ENCODE measurements at regions of chr3 and their contacts with region 1.

Region 1: DNA sequence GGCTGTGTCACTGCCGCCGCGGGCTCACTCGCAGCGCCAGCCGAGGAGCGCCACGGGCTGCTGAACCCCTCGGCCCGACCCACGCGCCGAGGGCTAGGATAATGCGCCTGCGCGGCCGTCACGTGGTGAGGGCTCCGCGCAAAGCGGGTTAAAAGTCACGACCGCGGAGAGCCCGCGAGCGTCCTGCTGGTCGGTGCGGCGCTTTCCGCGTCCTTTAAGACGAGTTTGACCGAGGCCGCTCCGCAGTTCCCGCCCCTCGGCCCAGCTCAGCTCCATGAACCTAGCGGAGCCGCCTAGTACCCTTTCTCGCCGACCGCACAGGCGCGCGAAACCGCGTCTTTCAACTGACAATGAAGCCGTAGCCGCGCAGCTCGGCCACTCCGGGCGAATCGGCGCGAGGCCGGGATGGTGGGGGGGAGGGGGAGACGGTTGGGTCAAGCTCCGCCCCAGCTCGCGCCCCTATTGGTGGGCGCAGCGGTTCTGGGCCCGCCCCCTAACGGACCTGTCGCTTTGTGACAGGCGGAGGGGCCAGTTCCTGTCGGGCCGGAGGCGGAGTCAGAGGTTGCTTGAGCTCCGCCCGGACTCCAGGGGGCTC is 636 bp upstream of the STT3B start:
- DNase-seq: peak; percentile 100
- H3K4me3 Mint-ChIP-seq: peak overlapping the region; percentile 95
- H3K27ac Mint-ChIP-seq: peak overlapping the region; percentile 99
- H3K4me1 Mint-ChIP-seq: peaks cover 19% of the 10 kb centered on the region
- H3K27me3 Mint-ChIP-seq: no peaks in the 10 kb centered on the region

Region 2: GRCh38 chr3:30475038-30475808 is 1056.9 kb before region 1 on chr3:
- intact Hi-C with region 1: no loop called
- DNase-seq: peak; percentile 73
- H3K4me3 Mint-ChIP-seq: peak overlapping the region; percentile 7
- H3K27ac Mint-ChIP-seq: peak overlapping the region; percentile 18
- H3K4me1 Mint-ChIP-seq: peaks cover 33% of the 10 kb centered on the region
- H3K27me3 Mint-ChIP-seq: no peaks in the 10 kb centered on the region

Region 3: DNA sequence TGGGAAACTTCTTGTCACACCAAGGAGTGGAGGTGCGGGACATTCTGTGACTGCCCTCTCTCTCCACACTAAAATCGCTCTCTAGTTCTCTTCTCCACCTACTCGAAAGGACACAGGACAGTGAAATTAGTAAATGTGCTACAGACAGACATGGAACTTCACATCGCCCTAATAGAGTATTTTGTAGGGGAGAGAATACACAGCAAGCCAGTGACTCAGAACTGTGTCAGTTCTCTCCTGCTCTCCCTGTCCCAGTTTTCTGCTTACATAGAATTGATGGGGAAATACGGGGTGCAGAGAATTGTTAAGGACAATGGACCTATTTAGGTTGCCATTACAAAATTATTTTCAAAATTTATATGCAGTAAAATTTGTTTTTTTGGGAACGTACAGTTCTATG is 478.1 kb before region 1 on chr3:
- intact Hi-C with region 1: no loop called
- DNase-seq: no peak
- H3K4me3 Mint-ChIP-seq: no peak overlapping the region
- H3K27ac Mint-ChIP-seq: no peak overlapping the region
- H3K4me1 Mint-ChIP-seq: peaks cover 4% of the 10 kb centered on the region
- H3K27me3 Mint-ChIP-seq: no peaks in the 10 kb centered on the region

Region 4: DNA sequence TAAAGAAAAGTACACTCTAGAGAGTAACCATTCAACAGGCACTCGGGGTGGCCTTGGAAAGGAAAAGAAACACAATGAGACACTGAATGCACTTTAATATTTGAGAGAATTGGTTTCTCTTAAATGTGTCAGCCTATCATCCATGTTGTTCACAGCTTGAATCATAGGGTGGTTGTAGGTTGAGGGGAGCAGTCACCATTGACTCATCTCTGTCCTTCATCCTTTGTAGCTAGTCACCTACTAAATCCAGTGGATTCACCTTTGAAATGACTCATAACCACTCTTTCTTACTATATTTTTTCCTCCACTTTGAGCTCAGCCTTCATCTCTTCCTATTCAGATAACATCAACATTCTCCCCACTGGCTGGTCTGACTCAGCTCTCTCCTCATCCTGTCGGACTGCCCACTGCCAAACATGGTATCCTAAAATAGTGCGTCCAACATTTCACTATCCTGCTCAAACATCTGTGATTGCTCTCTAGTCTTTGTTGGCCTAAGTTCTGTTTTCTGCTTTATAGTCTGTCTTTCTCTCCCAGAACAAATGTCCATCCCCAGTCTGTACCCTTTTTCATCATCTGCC is 455.0 kb before region 1 on chr3:
- intact Hi-C with region 1: loop called (anchors 1 kb)
- DNase-seq: peak; percentile 79
- H3K4me3 Mint-ChIP-seq: peak overlapping the region; percentile 22
- H3K27ac Mint-ChIP-seq: peak overlapping the region; percentile 83
- H3K4me1 Mint-ChIP-seq: peaks cover 32% of the 10 kb centered on the region
- H3K27me3 Mint-ChIP-seq: no peaks in the 10 kb centered on the region

Region 5: DNA sequence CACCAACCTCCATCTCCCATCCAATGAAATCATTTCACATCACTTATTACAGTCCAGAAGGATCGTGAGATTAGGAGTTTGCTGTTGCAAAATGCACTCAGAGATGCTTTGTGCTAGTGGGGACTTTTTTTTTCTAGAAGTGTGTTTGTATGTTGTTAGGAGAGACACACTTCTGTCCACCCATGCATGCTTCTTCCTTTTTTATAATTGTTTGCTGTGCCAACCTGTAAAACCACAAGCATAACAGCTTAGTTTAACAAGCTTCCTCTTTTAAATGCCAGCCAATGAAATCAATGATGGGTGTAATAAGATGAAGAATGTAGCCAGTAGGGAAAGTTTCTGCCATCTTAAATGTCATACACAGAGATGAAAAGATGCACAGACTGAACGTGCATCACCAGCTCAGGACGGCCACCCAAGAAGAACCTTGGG is 304.9 kb before region 1 on chr3:
- intact Hi-C with region 1: loop called (anchors 5 kb)
- DNase-seq: no peak
- H3K4me3 Mint-ChIP-seq: peak overlapping the region; percentile 18
- H3K27ac Mint-ChIP-seq: peak overlapping the region; percentile 89
- H3K4me1 Mint-ChIP-seq: peaks cover 77% of the 10 kb centered on the region
- H3K27me3 Mint-ChIP-seq: no peaks in the 10 kb centered on the region

Region 6: GRCh38 chr3:31472479-31473390 is 59.4 kb before region 1 on chr3:
- intact Hi-C with region 1: loop called (anchors 2 kb)
- DNase-seq: peak; percentile 70
- H3K4me3 Mint-ChIP-seq: no peak overlapping the region
- H3K27ac Mint-ChIP-seq: peak overlapping the region; percentile 9
- H3K4me1 Mint-ChIP-seq: peaks cover 13% of the 10 kb centered on the region
- H3K27me3 Mint-ChIP-seq: peaks cover 17% of the 10 kb centered on the region

Region 7: DNA sequence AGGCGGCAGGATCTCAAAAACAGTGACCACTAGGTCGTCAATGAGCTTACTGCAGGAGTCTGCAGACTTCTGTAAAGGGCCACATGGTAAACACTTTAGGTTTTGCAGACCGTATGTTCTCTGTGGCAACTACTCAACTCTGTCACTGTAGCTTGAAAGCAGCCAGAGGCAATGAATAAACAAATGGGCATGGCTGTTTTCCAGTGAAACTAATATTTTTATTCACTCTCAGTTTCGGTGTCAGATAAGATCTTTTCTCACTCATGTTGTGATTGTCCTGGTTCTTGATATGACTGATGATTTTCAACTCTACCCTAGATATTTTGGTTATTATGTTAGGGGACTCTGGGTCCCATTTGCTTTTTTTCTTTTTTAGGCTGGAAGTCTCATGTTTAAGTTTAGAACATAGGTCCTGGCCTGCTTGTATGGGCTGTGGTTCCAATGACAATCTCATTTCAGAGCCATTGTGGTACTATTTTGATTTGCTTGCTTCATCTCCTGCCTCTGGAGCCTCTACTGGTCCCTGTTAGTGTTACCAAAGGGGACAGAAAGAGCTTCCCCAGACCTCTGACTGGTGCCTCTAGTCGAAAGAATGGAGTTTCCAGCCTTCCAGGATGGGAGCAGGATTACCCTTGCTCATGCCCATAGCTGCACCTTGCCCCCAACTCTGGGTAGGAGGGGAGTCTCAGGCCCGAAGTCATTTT is 222.6 kb after region 1 on chr3:
- intact Hi-C with region 1: loop called (anchors 2 kb)
- DNase-seq: peak; percentile 65
- H3K4me3 Mint-ChIP-seq: peak overlapping the region; percentile 68
- H3K27ac Mint-ChIP-seq: peak overlapping the region; percentile 95
- H3K4me1 Mint-ChIP-seq: peaks cover 49% of the 10 kb centered on the region
- H3K27me3 Mint-ChIP-seq: no peaks in the 10 kb centered on the region

Region 8: DNA sequence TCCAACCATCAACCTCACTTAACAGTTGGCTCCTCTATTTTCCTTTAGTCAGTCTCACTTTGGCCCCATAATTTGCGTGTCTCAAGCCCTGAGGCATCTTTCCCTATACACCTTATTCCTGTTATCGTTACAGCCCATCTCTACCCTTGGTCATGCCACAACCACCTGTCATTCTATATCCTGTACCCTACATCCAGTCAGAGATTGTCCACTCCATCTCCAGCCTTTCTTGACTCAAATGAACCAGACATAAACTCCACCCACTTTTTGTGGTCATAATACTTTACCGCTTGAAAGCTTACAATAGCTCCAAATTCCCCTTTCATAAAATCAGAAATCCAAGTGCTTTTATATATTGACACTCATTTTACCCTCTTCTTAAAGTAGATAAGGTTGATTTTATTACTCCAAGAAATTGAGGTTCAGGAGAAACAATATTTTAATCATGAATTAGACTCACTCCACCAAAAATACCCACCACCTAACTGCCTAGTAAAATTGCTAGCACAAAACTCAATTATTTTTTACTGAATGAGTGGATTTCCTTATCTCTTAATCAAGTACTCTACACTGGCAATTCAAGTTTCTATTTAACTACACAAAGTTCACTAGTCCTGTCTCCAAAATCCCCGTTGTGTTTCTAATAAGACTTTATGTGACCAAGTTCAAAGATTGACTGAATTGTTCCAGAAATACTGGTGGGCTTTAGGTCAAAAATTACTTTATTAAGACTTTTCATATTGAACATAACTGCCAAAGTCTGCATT is 1428.5 kb after region 1 on chr3:
- intact Hi-C with region 1: loop called (anchors 10 kb)
- DNase-seq: no peak
- H3K4me3 Mint-ChIP-seq: peak overlapping the region; percentile 68
- H3K27ac Mint-ChIP-seq: peak overlapping the region; percentile 96
- H3K4me1 Mint-ChIP-seq: peaks cover 46% of the 10 kb centered on the region
- H3K27me3 Mint-ChIP-seq: no peaks in the 10 kb centered on the region

Measured in activated CD4-positive, alpha-beta T cell treated with anti-CD3 and anti-CD28 coated beads, Interleukin-2, amount 10 ng/mL, durations not matched to agents 24 days and 14 days (primary cell).